ENCODE measurements at regions of chr6 and their contacts with region 1.

Region 1: DNA sequence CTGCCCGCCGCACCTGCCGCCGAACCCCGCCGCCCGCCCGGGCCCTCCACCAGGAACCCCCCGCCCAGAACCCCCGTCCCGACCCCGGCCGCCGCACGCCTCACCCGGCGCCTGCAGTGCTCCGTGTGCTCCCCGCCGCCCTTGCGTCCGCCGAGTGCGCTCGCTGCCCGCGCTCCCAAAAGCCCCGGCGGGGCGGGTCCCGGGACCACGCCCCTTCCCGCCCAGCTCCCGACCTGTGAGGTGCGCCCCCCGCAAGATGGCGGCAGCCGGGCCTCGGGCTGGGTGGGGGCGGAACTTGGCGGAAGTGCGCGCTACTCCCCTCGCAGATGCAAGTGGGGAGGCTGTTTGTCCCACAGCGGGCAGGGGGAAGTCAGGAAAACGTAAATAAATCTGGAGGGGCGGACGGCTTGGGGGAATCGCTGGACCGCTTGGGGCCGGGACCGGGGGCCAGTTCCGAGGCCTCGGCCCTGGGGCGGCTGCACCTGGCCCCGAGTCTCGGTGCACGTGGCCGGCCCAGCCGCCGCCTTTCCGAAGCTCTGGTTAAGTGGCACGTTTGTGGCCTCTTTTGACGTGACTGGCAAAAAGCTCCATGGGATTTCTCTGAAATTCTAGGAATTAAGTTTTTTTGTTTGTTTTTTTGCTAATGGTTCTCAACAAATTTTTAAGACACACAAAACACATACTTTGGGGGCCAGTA is at the start of gene EZR:
- DNase-seq: peak; percentile 89 to 90
- H3K4me3 ChIP-seq: peak within 1 kb of the TSS; percentile 71
- H3K4me3 Mint-ChIP-seq: peak within 1 kb of the TSS; percentile 89
- H3K27ac Mint-ChIP-seq: peak within 1 kb of the TSS; percentile 95
- H3K4me1 ChIP-seq: peaks cover 29% of the 10 kb centered on the region
- H3K4me1 Mint-ChIP-seq: peaks cover 18% of the 10 kb centered on the region
- H3K27me3 ChIP-seq: no peaks in the 10 kb centered on the region
- H3K27me3 Mint-ChIP-seq: no peaks in the 10 kb centered on the region
- CTCF ChIP-seq: peak in 1 of 2 experiments; percentile 13
- total RNA-seq, gene EZR: 282 and 290 TPM in 2 replicates

Region 2: DNA sequence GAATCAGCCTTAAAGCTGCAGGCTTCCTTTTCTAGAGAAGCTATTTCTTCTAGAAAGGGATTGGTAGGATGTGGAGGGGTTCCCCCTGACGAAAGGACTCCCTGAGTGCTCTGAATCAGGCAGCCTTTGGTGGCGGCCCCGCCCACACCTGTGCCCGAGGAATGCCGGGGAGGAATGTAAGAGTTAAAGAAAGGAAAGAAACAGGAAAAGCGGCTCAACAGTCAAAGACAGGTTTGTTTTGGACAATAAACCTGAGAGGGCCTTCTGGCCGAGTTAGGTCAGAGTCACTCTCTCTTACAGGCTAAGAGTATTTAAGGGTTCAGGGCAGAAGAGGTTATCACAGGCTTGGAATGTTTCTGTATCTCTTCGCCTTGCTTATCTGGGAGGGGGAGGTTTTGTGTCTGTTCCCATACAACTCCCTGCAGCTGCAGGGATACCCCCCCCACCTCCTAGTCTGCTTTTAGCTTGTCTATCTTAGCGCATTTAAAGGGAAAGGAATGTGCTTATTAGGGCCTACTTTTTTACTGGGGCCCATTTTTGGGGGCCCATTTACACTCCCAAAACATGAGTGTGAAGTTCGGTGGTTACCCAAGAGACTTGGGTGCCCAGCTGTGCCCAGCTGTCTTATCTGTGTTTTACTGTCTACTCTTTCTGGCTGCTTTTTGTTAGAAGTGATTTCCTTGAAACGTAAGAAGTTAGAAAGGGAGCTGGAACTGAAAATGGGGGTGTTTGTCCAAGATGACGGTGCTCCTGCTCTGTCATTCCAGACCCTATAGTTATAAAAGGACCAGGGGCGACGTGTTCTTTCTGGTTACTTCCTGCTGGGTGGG is 207.6 kb before region 1 on chr6:
- CTCF ChIA-PET with region 1: no interaction called
- POLR2A ChIA-PET with region 1: interaction called, 14 read pairs
- intact Hi-C with region 1: no loop called
- DNase-seq: peak; percentile 87 to 89
- H3K4me3 ChIP-seq: peak overlapping the region; percentile 11; the same call in 1 of the 2 replicates
- H3K4me3 Mint-ChIP-seq: peak overlapping the region; percentile 50
- H3K27ac Mint-ChIP-seq: peak overlapping the region; percentile 75
- H3K4me1 ChIP-seq: peaks cover 35% of the 10 kb centered on the region
- H3K4me1 Mint-ChIP-seq: peaks cover 35% of the 10 kb centered on the region
- H3K27me3 ChIP-seq: no peaks in the 10 kb centered on the region
- H3K27me3 Mint-ChIP-seq: no peaks in the 10 kb centered on the region
- CTCF ChIP-seq: no peak

Region 3: DNA sequence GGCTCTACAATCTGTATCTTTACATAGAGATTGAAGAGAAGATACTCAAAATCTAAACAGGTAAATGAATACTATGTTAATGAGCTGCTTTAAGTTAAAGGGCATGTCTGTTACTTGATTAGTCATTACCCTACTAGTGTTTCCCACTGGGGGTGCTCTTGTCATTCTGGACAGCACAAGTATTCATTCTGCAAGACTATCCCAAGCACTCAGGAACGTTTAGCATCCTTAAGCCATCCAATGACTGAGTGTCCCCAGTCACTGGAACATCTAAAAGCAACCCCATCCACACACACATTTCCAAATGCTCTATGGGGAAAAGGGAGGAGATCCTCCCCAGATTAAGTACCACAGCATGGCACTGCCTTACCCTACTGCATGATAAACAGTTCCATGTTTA is 25.9 kb before region 1 on chr6:
- CTCF ChIA-PET with region 1: no interaction called
- POLR2A ChIA-PET with region 1: no interaction called
- intact Hi-C with region 1: loop called (anchors 2 kb)
- DNase-seq: peak in 1 of 2 experiments; percentile 64
- H3K4me3 ChIP-seq: no peak overlapping the region
- H3K4me3 Mint-ChIP-seq: no peak overlapping the region
- H3K27ac Mint-ChIP-seq: no peak overlapping the region
- H3K4me1 ChIP-seq: peaks cover 29% of the 10 kb centered on the region
- H3K4me1 Mint-ChIP-seq: no peaks in the 10 kb centered on the region
- H3K27me3 ChIP-seq: no peaks in the 10 kb centered on the region
- H3K27me3 Mint-ChIP-seq: no peaks in the 10 kb centered on the region
- CTCF ChIP-seq: peak; percentile 45 to 50

Region 4: GRCh38 chr6:158835616-158836221 is 16.4 kb after region 1 on chr6:
- CTCF ChIA-PET with region 1: interaction called, 10 read pairs
- POLR2A ChIA-PET with region 1: interaction called, 13 read pairs
- intact Hi-C with region 1: loop called (anchors 2 kb)
- DNase-seq: peak; percentile 61 to 62
- H3K4me3 ChIP-seq: peak overlapping the region; percentile 5; the same call in 1 of the 2 replicates
- H3K4me3 Mint-ChIP-seq: peak overlapping the region; percentile 60
- H3K27ac Mint-ChIP-seq: no peak overlapping the region
- H3K4me1 ChIP-seq: peaks cover 36% of the 10 kb centered on the region
- H3K4me1 Mint-ChIP-seq: peaks cover 26% of the 10 kb centered on the region
- H3K27me3 ChIP-seq: no peaks in the 10 kb centered on the region
- H3K27me3 Mint-ChIP-seq: no peaks in the 10 kb centered on the region
- CTCF ChIP-seq: no peak

Region 5: DNA sequence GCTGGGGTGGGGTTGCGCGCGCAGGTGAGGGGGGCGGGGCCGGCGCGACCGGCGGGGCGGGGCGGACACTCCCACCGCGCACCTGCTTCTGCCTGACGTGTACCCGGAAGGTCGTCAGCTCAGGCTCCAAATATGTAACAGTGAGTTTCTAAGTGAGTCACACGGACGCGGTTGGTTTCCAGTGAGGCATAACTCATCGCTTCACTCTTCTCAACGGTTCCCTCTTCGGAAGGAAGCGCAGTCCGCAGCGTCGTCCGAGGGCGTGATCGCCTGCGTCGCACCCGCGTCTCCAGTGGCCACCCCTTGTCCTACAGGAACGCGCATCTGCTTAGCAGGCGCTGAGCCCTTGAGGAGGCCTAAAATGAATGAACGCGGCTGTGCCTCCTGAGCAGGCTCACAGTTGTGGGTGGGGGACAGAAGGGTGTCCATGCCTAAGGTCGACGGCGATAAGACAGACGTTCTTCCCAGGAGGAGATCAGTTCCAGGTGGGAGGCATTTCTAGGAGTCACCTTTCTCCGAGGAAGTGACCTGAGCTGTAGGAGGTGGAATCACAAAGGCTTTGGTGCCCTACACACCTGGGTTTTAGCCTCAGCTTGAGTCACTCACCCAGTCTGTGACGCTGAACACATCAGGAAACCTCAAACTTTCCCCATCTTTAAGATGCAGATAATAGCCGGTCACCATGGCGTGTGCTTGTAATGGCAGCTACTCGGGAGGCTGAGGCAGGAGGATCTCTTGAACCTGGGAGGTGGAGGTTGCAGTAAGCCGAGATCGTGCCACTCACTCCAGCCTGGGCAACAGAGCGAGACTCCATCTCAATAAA is 50.7 kb after region 1 on chr6:
- CTCF ChIA-PET with region 1: interaction called, 5 read pairs
- POLR2A ChIA-PET with region 1: interaction called, 27 read pairs
- intact Hi-C with region 1: loop called (anchors 1 kb)
- DNase-seq: peak in 1 of 2 experiments; percentile 93
- H3K4me3 ChIP-seq: peak overlapping the region; percentile 61
- H3K4me3 Mint-ChIP-seq: peak overlapping the region; percentile 84
- H3K27ac Mint-ChIP-seq: peak overlapping the region; percentile 99
- H3K4me1 ChIP-seq: peaks cover 19% of the 10 kb centered on the region
- H3K4me1 Mint-ChIP-seq: peaks cover 31% of the 10 kb centered on the region
- H3K27me3 ChIP-seq: no peaks in the 10 kb centered on the region
- H3K27me3 Mint-ChIP-seq: no peaks in the 10 kb centered on the region
- CTCF ChIP-seq: peak in 1 of 2 experiments; percentile 21

Region 6: GRCh38 chr6:158958504-158959386 is 139.4 kb after region 1 on chr6:
- CTCF ChIA-PET with region 1: no interaction called
- POLR2A ChIA-PET with region 1: interaction called, 11 read pairs
- intact Hi-C with region 1: no loop called
- DNase-seq: peak in 1 of 2 experiments; percentile 32
- H3K4me3 ChIP-seq: no peak overlapping the region
- H3K4me3 Mint-ChIP-seq: peak overlapping the region; percentile 15
- H3K27ac Mint-ChIP-seq: peak overlapping the region; percentile 77
- H3K4me1 ChIP-seq: peaks cover 14% of the 10 kb centered on the region
- H3K4me1 Mint-ChIP-seq: peaks cover 7% of the 10 kb centered on the region
- H3K27me3 ChIP-seq: no peaks in the 10 kb centered on the region
- H3K27me3 Mint-ChIP-seq: no peaks in the 10 kb centered on the region
- CTCF ChIP-seq: peak in 1 of 2 experiments; percentile 15

Region 7: GRCh38 chr6:159679091-159680077 is 860.0 kb after region 1 on chr6:
- CTCF ChIA-PET with region 1: no interaction called
- POLR2A ChIA-PET with region 1: no interaction called
- intact Hi-C with region 1: no loop called
- DNase-seq: no peak
- H3K4me3 ChIP-seq: no peak overlapping the region
- H3K4me3 Mint-ChIP-seq: no peak overlapping the region
- H3K27ac Mint-ChIP-seq: no peak overlapping the region
- H3K4me1 ChIP-seq: no peaks in the 10 kb centered on the region
- H3K4me1 Mint-ChIP-seq: no peaks in the 10 kb centered on the region
- H3K27me3 ChIP-seq: no peaks in the 10 kb centered on the region
- H3K27me3 Mint-ChIP-seq: no peaks in the 10 kb centered on the region
- CTCF ChIP-seq: no peak